ENCODE measurements at regions of chr11 and their contacts with region 1.

Region 1: GRCh38 chr11:122202951-122203456 is 87.0 kb upstream of the BLID start:
- DNase-seq: peak; percentile 81
- H3K4me3 Mint-ChIP-seq: peak overlapping the region; percentile 43
- H3K27ac Mint-ChIP-seq: no peak overlapping the region
- H3K4me1 Mint-ChIP-seq: peaks cover 45% of the 10 kb centered on the region
- H3K27me3 Mint-ChIP-seq: no peaks in the 10 kb centered on the region
- CTCF ChIP-seq: peak; percentile 96

Region 2: GRCh38 chr11:121292495-121293287 is 910.3 kb before region 1 on chr11 and contains the start of gene SC5D:
- CTCF ChIA-PET with region 1: no interaction called
- POLR2A ChIA-PET with region 1: no interaction called
- intact Hi-C with region 1: loop called (anchors 10 kb)
- DNase-seq: peak; percentile 92
- H3K4me3 Mint-ChIP-seq: peak within 1 kb of the TSS; percentile 94
- H3K27ac Mint-ChIP-seq: peak within 1 kb of the TSS; percentile 93
- H3K4me1 Mint-ChIP-seq: peaks cover 27% of the 10 kb centered on the region
- H3K27me3 Mint-ChIP-seq: no peaks in the 10 kb centered on the region
- CTCF ChIP-seq: no peak
- total RNA-seq, gene SC5D: 25.9 and 27.6 TPM in 2 replicates

Region 3: DNA sequence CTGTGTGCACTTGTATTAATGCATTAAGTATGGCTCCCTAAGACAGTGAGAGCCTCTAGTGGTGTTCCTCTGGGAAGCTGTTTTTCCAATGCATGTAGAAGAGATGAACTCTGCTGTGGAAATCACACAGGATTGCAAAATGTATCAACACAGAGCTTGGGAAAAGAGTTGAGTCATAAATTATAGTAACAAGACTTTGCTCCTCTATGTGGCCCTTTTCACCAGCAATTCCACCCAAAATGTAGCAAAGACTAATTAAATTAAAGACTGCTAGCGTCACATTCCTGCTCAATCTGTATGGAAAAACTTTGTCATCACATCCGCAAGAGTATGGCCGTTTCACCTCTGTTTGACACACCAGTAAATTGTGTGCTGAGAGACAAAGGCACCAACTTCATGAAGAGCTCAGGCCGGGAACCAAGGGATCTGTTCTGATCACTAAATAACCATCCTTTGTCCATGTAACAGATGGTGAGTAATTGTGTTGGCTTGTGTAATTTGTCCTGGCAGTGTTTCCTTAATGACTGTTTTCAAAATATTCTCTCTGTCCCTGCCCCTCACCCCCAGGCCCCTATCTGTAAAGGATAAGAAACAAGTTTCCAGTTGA is 541.0 kb before region 1 on chr11:
- CTCF ChIA-PET with region 1: interaction called, 83 read pairs
- POLR2A ChIA-PET with region 1: interaction called, 14 read pairs
- intact Hi-C with region 1: no loop called
- DNase-seq: peak; percentile 63
- H3K4me3 Mint-ChIP-seq: no peak overlapping the region
- H3K27ac Mint-ChIP-seq: peak overlapping the region; percentile 86
- H3K4me1 Mint-ChIP-seq: peaks cover 12% of the 10 kb centered on the region
- H3K27me3 Mint-ChIP-seq: no peaks in the 10 kb centered on the region
- CTCF ChIP-seq: no peak

Region 4: GRCh38 chr11:122020902-122021301 is 182.1 kb before region 1 on chr11:
- CTCF ChIA-PET with region 1: interaction called, 3 read pairs
- POLR2A ChIA-PET with region 1: no interaction called
- intact Hi-C with region 1: loop called (anchors 2 kb)
- DNase-seq: peak; percentile 16
- H3K4me3 Mint-ChIP-seq: no peak overlapping the region
- H3K27ac Mint-ChIP-seq: no peak overlapping the region
- H3K4me1 Mint-ChIP-seq: peaks cover under 1% of the 10 kb centered on the region
- H3K27me3 Mint-ChIP-seq: no peaks in the 10 kb centered on the region
- CTCF ChIP-seq: no peak

Region 5: DNA sequence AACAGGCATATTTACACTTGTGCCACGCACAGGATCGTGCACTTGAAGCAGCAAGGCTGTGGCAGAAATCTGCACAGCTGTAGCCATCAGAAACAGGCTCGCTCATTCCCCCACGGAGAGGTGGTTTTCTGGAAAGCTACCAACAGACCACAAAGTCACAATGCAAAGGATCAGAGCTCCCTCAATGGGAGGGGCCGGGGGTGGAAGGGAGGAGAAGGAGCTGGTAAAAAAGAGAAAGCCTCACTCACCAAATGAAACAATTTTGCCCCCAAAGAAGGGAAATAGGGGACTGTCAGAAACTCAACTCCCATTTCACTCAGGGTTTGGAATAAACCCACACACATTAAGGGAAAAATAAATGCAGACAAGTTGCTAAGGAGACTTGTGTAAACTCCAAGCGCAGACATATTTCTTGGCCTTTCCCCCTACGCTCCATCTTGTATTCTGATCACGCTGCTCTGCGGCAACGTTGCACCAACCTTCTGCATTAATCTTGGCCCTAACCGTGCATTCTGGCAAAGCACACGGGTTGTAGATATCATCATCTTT is 43.8 kb before region 1 on chr11:
- CTCF ChIA-PET with region 1: interaction called, 16 read pairs
- POLR2A ChIA-PET with region 1: interaction called, 41 read pairs
- intact Hi-C with region 1: loop called (anchors 1 kb)
- DNase-seq: peak; percentile 75
- H3K4me3 Mint-ChIP-seq: peak overlapping the region; percentile 76
- H3K27ac Mint-ChIP-seq: peak overlapping the region; percentile 96
- H3K4me1 Mint-ChIP-seq: peaks cover 76% of the 10 kb centered on the region
- H3K27me3 Mint-ChIP-seq: no peaks in the 10 kb centered on the region
- CTCF ChIP-seq: no peak

Region 6: DNA sequence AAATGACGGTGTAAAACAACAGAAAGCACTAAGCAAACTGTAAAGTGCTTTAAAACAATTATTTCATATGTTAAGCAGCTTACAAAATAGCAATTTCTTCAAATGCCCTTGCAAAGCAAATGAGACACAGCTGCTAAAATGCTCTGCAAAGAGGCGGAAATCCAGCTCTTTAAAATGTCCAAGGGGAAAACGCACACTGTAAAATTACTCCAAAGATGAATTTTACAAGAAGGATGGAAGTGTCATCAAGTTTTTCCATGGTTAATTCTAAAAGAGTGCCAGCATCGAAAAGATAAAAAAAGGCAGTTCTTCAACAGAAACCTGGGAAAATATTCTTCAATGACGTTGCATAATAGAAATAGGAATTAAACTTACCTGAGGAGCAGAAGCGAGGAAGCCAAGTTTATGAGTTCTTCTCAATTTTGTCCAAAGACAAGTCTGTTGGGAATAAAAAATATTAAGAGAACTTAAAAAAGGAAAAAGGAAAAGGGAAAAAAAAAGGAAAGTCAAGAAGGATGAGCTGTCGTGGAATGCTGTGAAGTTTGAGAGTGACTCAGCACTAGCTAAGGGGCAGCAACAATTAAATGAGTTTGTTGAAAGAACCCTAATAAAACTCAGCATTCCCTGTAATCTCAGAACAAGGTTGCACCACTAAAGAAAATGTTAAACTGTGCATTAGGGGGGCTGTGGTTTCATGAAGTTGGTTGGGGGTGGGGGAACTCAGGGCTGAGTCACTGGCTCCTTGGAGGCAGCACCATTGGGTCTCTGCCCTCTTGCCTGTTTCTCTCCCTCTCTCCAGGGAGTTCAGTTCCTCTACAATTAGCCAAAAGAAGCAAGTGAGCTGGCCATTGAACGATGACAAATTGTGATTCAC is 22.8 kb before region 1 on chr11:
- CTCF ChIA-PET with region 1: interaction called, 4 read pairs
- POLR2A ChIA-PET with region 1: interaction called, 11 read pairs
- intact Hi-C with region 1: loop called (anchors 1 kb)
- DNase-seq: peak; percentile 95
- H3K4me3 Mint-ChIP-seq: peak overlapping the region; percentile 67
- H3K27ac Mint-ChIP-seq: peak overlapping the region; percentile 90
- H3K4me1 Mint-ChIP-seq: peaks cover 62% of the 10 kb centered on the region
- H3K27me3 Mint-ChIP-seq: no peaks in the 10 kb centered on the region
- CTCF ChIP-seq: no peak

Measured in MCF 10A (cell line).